GM12878 (cell line): ENCODE measurements at regions of chr7 and their contacts with region 1.

Region 1: GRCh38 chr7:50206453-50207250 is 97.9 kb upstream of the IKZF1 start:
- DNase-seq: no peak
- ATAC-seq: no peak
- H3K4me3 ChIP-seq: no peak overlapping the region
- H3K27ac ChIP-seq: no peak overlapping the region
- H3K4me1 ChIP-seq: no peaks in the 10 kb centered on the region
- H3K27me3 ChIP-seq: no peaks in the 10 kb centered on the region
- CTCF ChIP-seq: no peak
- EP300 ChIP-seq: no peak
- POLR2A ChIP-seq: no peak
- RAD21 ChIP-seq: no peak

Region 2: GRCh38 chr7:49643321-49643720 is 563.3 kb before region 1 on chr7:
- CTCF ChIA-PET with region 1: no interaction called
- POLR2A ChIA-PET with region 1: no interaction called
- RAD21 ChIA-PET with region 1: no interaction called
- SMC1A ChIA-PET with region 1: no interaction called
- in situ Hi-C with region 1: no loop called
- intact Hi-C with region 1: no loop called
- DNase-seq: no peak
- ATAC-seq: no peak
- H3K4me3 ChIP-seq: no peak overlapping the region
- H3K27ac ChIP-seq: no peak overlapping the region
- H3K4me1 ChIP-seq: no peaks in the 10 kb centered on the region
- H3K27me3 ChIP-seq: no peaks in the 10 kb centered on the region
- CTCF ChIP-seq: no peak
- EP300 ChIP-seq: no peak
- POLR2A ChIP-seq: no peak
- RAD21 ChIP-seq: no peak

Region 3: GRCh38 chr7:50092579-50093491 is 113.8 kb before region 1 on chr7 and contains the start of gene ZPBP:
- CTCF ChIA-PET with region 1: interaction called, 5 read pairs
- POLR2A ChIA-PET with region 1: no interaction called
- RAD21 ChIA-PET with region 1: interaction called, 4 read pairs
- SMC1A ChIA-PET with region 1: interaction called, 12 read pairs
- in situ Hi-C with region 1: no loop called
- intact Hi-C with region 1: no loop called
- DNase-seq: peak; percentile 30
- ATAC-seq: peak; percentile 77
- H3K4me3 ChIP-seq: peak within 1 kb of the TSS; percentile 38; the same call in 1 of the 2 replicates
- H3K27ac ChIP-seq: no peak within 1 kb of the TSS
- H3K4me1 ChIP-seq: no peaks in the 10 kb centered on the region
- H3K27me3 ChIP-seq: no peaks in the 10 kb centered on the region
- CTCF ChIP-seq: peak; percentile 54 to 72 (median 68); a peak in 5 of 6 replicates
- EP300 ChIP-seq: no peak
- POLR2A ChIP-seq: peak; percentile 58
- RAD21 ChIP-seq: peak; percentile 95
- polyA plus RNA-seq, gene ZPBP: not detected

Region 4: GRCh38 chr7:50147951-50148808 is 58.5 kb before region 1 on chr7:
- CTCF ChIA-PET with region 1: interaction called, 151 read pairs
- POLR2A ChIA-PET with region 1: interaction called, 3 read pairs
- RAD21 ChIA-PET with region 1: interaction called, 135 read pairs
- SMC1A ChIA-PET with region 1: interaction called, 160 read pairs
- in situ Hi-C with region 1: no loop called
- intact Hi-C with region 1: no loop called
- DNase-seq: peak; percentile 76
- ATAC-seq: peak; percentile 70
- H3K4me3 ChIP-seq: no peak overlapping the region
- H3K27ac ChIP-seq: peak overlapping the region; percentile 59
- H3K4me1 ChIP-seq: peaks cover 46% of the 10 kb centered on the region
- H3K27me3 ChIP-seq: no peaks in the 10 kb centered on the region
- CTCF ChIP-seq: no peak
- EP300 ChIP-seq: peak; percentile 52 to 85; a peak in 3 of 4 replicates
- POLR2A ChIP-seq: no peak
- RAD21 ChIP-seq: no peak

Region 5: DNA sequence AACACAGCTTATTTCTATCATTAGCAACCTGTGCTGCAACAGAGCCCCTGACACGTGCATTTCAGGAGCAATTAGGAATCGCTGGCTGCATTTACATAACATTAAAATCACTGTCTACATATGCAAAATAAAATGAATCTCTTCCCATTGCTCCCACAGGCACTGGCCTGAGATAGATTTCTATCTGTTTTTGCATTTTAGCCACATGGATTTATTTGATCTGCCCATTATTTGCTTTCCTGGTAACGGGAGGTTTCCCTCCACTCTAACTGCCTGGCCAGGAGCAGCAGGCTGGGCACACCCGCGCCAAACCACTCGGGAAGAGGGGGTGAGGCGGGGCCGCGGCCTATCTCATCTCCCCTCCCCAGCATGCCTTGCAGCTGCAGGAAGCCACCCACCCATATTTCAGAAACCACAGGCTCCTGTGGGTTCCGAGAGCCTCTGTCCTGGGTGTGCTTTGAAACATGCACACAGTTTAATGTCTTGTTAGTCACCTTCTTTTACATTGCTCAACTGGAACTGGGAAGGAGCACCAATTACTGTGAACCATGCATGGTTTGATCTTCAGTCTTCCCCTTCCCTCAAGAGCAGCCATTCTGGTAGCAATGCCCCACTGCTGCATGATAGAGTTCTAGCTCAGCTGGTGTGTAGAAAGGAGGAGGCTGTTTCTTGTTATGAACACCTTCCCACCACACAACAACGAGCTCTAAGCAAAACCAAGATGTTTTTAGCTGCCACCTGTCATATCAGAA is 60.2 kb after region 1 on chr7:
- CTCF ChIA-PET with region 1: interaction called, 42 read pairs
- POLR2A ChIA-PET with region 1: no interaction called
- RAD21 ChIA-PET with region 1: interaction called, 47 read pairs
- SMC1A ChIA-PET with region 1: interaction called, 238 read pairs
- in situ Hi-C with region 1: no loop called
- intact Hi-C with region 1: loop called (anchors 2 kb)
- DNase-seq: peak; percentile 84
- ATAC-seq: peak; percentile 56
- H3K4me3 ChIP-seq: peak overlapping the region; percentile 31; the same call in 1 of the 2 replicates
- H3K27ac ChIP-seq: peak overlapping the region; percentile 77
- H3K4me1 ChIP-seq: peaks cover 87% of the 10 kb centered on the region
- H3K27me3 ChIP-seq: no peaks in the 10 kb centered on the region
- CTCF ChIP-seq: no peak
- EP300 ChIP-seq: peak in 1 of 2 experiments; percentile 38; a peak in 1 of 4 replicates
- POLR2A ChIP-seq: peak; percentile 27; the same call in 1 of the 2 replicates
- RAD21 ChIP-seq: no peak

Region 6: DNA sequence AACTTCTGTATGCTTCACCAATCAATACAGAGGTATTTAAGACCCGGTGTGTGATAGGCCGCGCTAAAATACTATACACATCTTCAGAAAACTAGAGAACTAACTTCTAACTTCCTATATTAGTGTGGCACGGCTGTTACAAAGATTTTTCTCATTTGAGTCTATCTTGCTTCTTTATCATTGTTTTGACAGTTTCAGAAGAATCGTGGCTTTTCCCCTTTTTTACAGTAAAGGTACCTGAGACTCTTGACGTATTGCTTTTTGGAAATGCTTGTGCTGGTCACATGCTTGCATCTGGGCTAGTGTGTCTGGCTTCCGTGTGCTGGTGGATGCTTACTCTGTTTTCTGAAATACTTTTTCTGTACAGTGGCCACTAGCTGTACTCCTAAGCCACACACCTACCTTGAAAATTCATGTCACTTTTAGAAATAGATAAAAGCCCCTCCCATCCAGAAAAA is 110.6 kb after region 1 on chr7:
- CTCF ChIA-PET with region 1: interaction called, 19 read pairs
- POLR2A ChIA-PET with region 1: interaction called, 4 read pairs
- RAD21 ChIA-PET with region 1: interaction called, 9 read pairs
- SMC1A ChIA-PET with region 1: interaction called, 25 read pairs
- in situ Hi-C with region 1: no loop called
- intact Hi-C with region 1: no loop called
- DNase-seq: no peak
- ATAC-seq: peak; percentile 82
- H3K4me3 ChIP-seq: no peak overlapping the region
- H3K27ac ChIP-seq: peak overlapping the region; percentile 66; the same call in 1 of the 2 replicates
- H3K4me1 ChIP-seq: peaks cover 47% of the 10 kb centered on the region
- H3K27me3 ChIP-seq: no peaks in the 10 kb centered on the region
- CTCF ChIP-seq: no peak; a peak in 1 of 6 replicates
- EP300 ChIP-seq: no peak
- POLR2A ChIP-seq: no peak
- RAD21 ChIP-seq: no peak

Region 7: GRCh38 chr7:50467817-50468610 is 261.4 kb after region 1 on chr7:
- CTCF ChIA-PET with region 1: interaction called, 10 read pairs
- POLR2A ChIA-PET with region 1: no interaction called
- RAD21 ChIA-PET with region 1: interaction called, 3 read pairs
- SMC1A ChIA-PET with region 1: no interaction called
- in situ Hi-C with region 1: no loop called
- intact Hi-C with region 1: no loop called
- DNase-seq: no peak
- ATAC-seq: peak; percentile 95
- H3K4me3 ChIP-seq: no peak overlapping the region
- H3K27ac ChIP-seq: no peak overlapping the region
- H3K4me1 ChIP-seq: no peaks in the 10 kb centered on the region
- H3K27me3 ChIP-seq: no peaks in the 10 kb centered on the region; a peak in 2 of 4 replicates
- CTCF ChIP-seq: peak; percentile 78 to 90 (median 85)
- EP300 ChIP-seq: no peak
- POLR2A ChIP-seq: no peak
- RAD21 ChIP-seq: peak; percentile 85